Gastrocnemius medialis (tissue), 4 donors: ENCODE measurements at regions of chr5 and their contacts with region 1.

Region 1: GRCh38 chr5:98905857-98906690 is 22.7 kb downstream of the CHD1 start:
- DNase-seq: no peak
- ATAC-seq: no peak
- H3K4me3 ChIP-seq: no peak overlapping the region
- H3K27ac ChIP-seq: no peak overlapping the region
- H3K4me1 ChIP-seq: peaks cover 18 to 27% of the 10 kb centered on the region in 2 donors
- H3K27me3 ChIP-seq: no peaks in the 10 kb centered on the region
- CTCF ChIP-seq: peak; percentile 66 to 90 (median 80)
- POLR2A ChIP-seq: no peak

Region 2: GRCh38 chr5:98872674-98873073 is 33.4 kb before region 1 on chr5:
- in situ Hi-C with region 1: no loop called
- intact Hi-C with region 1: no loop called
- DNase-seq: no peak
- ATAC-seq: no peak
- H3K4me3 ChIP-seq: no peak overlapping the region
- H3K27ac ChIP-seq: no peak overlapping the region
- H3K4me1 ChIP-seq: no peaks in the 10 kb centered on the region
- H3K27me3 ChIP-seq: no peaks in the 10 kb centered on the region
- CTCF ChIP-seq: no peak
- POLR2A ChIP-seq: no peak

Region 3: GRCh38 chr5:99025298-99026045 is 119.4 kb after region 1 on chr5:
- in situ Hi-C with region 1: loop called (anchors 5 kb)
- intact Hi-C with region 1: no loop called
- DNase-seq: no peak
- ATAC-seq: no peak
- H3K4me3 ChIP-seq: no peak overlapping the region
- H3K27ac ChIP-seq: no peak overlapping the region
- H3K4me1 ChIP-seq: no peaks in the 10 kb centered on the region
- H3K27me3 ChIP-seq: no peaks in the 10 kb centered on the region
- CTCF ChIP-seq: no peak
- POLR2A ChIP-seq: no peak

Region 4: DNA sequence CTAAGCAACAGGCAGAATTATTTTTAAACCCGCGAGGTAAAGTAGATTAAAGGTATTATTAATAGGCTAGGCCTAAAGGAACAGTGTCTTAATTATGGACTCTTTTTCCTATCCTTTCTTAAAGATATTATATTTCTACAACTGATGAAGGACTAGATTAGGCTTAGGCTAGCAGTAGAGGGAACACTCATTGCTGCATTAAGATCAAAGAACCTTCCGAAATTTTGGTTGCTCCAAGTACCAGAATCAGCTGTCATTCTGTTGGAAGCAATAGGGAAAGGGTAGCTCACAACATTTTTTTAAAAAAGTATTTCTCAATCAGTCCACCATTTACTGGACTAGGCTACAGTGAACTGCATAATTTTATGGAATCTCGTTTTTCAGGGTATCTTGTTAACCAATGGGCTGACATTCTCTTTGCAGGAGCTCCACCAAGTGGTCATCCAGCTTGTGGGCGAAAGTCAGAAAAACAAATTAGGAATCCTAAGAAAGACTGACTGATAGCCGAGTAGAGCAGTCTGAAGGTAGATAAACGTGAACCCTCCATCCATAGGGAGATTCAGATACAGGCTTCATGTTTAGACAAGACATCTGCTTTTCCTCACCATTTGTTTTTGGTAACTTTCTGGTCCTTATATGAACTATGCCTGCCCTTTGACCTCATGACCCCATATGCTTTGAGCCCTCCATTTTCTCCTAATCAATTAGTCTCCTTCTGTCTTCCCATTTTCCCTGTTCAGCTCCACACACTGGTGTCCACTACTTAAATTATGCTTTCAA is 126.3 kb after region 1 on chr5:
- in situ Hi-C with region 1: loop called (anchors 5 kb)
- intact Hi-C with region 1: loop called (anchors 1 kb)
- DNase-seq: peak; percentile 27 to 36
- ATAC-seq: peak; percentile 83 to 89
- H3K4me3 ChIP-seq: peak overlapping the region in 2 of 4 donors; percentile 12 to 39
- H3K27ac ChIP-seq: peak overlapping the region; percentile 17 to 52 (median 39)
- H3K4me1 ChIP-seq: peaks cover 0 to 4% of the 10 kb centered on the region in 2 donors
- H3K27me3 ChIP-seq: no peaks in the 10 kb centered on the region
- CTCF ChIP-seq: peak; percentile 51 to 74 (median 67)
- POLR2A ChIP-seq: no peak

Region 5: DNA sequence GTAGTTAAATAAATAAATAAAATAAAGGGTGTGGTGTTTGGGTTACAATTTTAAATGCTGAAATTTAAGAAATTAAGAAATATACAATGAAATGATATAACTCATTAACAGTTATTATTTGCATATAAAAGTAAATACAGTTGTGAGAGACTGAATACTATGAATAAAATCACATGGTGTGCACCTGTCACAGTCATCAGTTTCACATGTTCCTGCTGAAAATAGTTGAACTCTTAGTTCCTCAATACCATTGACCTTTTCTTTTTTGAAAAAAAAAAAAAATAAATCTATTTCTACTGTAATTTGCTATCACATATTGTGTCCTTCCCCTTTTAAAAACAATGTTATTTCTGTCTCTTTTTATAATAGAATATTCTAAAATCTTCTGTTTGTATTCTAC is 153.6 kb after region 1 on chr5:
- in situ Hi-C with region 1: no loop called
- intact Hi-C with region 1: loop called (anchors 2 kb)
- DNase-seq: no peak
- ATAC-seq: no peak
- H3K4me3 ChIP-seq: no peak overlapping the region
- H3K27ac ChIP-seq: no peak overlapping the region
- H3K4me1 ChIP-seq: no peaks in the 10 kb centered on the region
- H3K27me3 ChIP-seq: no peaks in the 10 kb centered on the region
- CTCF ChIP-seq: no peak
- POLR2A ChIP-seq: no peak